ENCODE measurements at regions of chr20 and their contacts with region 1.

Region 1: GRCh38 chr20:63707549-63708300 is at the starts of genes ARFRP1 and ZGPAT:
- DNase-seq: peak; percentile 93
- H3K4me3 ChIP-seq: peak within 1 kb of the TSS; percentile 70 to 99 (median 95)
- H3K27ac ChIP-seq: peak within 1 kb of the TSS; percentile 90 to 95 (median 92)
- H3K4me1 ChIP-seq: peaks cover 18 to 25% (median 23%) of the 10 kb centered on the region in 4 donors
- H3K27me3 ChIP-seq: no peaks in the 10 kb centered on the region
- CTCF ChIP-seq: no peak
- EP300 ChIP-seq: no peak
- POLR2A ChIP-seq: peak; percentile 57
- total RNA-seq, gene ARFRP1: 46.2 to 75.4 (median 56.2) TPM
- total RNA-seq, gene ZGPAT: 29.1 to 346 (median 76.5) TPM

Region 2: DNA sequence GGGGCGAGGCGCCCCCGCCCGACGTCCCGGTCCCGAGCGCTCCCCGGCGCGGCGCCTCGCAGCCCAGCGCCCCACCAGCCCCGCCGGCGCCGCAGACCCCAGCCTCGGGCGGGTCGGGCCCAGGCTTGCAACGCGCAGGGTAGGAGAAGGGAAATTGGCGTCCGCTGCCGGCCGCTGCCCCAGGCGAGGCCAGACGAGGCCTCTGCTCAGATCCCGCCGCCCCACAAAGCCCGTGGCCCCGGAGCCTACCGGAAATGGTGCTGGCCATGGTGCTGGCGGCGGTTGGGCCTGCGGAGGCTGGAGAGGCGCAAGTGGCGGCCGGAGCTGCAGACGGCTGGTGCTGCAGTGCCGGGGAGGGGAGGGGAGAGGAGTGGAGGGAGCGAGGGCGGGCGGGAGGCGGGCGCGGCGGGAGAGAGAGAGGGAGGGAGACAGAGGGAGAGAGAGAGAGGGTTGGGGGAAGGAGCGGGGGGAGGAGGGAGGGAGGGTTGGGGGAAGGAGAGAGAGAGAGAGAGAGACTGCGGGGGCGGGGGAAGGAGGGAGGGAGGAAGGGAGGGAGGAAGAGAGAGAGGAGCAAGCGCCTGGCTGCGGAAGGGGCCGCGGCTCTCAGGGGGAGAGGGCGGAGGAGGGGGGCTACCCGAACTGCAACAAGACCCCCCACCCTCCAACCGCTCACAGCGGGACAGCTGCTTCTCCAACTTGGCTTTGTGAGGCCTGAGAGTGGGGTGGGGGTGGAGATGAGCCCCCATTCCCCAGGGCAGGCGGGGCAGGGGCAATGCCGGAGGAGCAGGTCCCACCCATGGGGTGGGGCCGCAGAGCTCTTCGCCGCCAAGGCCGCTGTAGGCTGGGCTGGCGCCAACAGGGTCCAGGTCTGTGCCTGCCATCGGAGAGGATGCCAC is 54.4 kb before region 1 on chr20 and contains the start of gene STMN3:
- in situ Hi-C with region 1: no loop called
- intact Hi-C with region 1: loop called (anchors 2 kb)
- DNase-seq: peak; percentile 83
- H3K4me3 ChIP-seq: peak within 1 kb of the TSS; percentile 37 to 58 (median 48)
- H3K27ac ChIP-seq: peak within 1 kb of the TSS; percentile 39 to 70 (median 50)
- H3K4me1 ChIP-seq: peaks cover 8 to 37% (median 26%) of the 10 kb centered on the region in 4 donors
- H3K27me3 ChIP-seq: peaks cover 36% of the 10 kb centered on the region
- CTCF ChIP-seq: no peak
- EP300 ChIP-seq: no peak
- POLR2A ChIP-seq: no peak
- total RNA-seq, gene STMN3: 0.75 to 7.1 (median 4.4) TPM